CD8-positive, alpha-beta memory T cell (primary cell): ENCODE measurements at regions of chr14 and their contacts with region 1.

Region 1: GRCh38 chr14:105045710-105046326 is 19.4 kb downstream of the GPR132 start:
- DNase-seq: peak; percentile 85 to 94 (median 93)
- H3K4me3 ChIP-seq: no peak overlapping the region
- H3K4me3 Mint-ChIP-seq: peak overlapping the region in 3 of 7 donors; percentile 3 to 23 (median 23)
- H3K27ac ChIP-seq: no peak overlapping the region
- H3K27ac Mint-ChIP-seq: peak overlapping the region; percentile 19 to 87 (median 70)
- H3K4me1 ChIP-seq: peaks cover 6% of the 10 kb centered on the region
- H3K4me1 Mint-ChIP-seq: peaks cover 9 to 17% (median 14%) of the 10 kb centered on the region in 3 donors
- H3K27me3 ChIP-seq: peaks cover 4% of the 10 kb centered on the region
- H3K27me3 Mint-ChIP-seq: peaks cover 3 to 4% of the 10 kb centered on the region in 2 donors

Region 2: GRCh38 chr14:104970231-104971101 is 75.4 kb before region 1 on chr14:
- CTCF ChIA-PET with region 1: interaction called, 122 read pairs
- POLR2A ChIA-PET with region 1: interaction called, 7 read pairs
- DNase-seq: no peak
- H3K4me3 ChIP-seq: no peak overlapping the region
- H3K4me3 Mint-ChIP-seq: no peak overlapping the region
- H3K27ac ChIP-seq: no peak overlapping the region
- H3K27ac Mint-ChIP-seq: no peak overlapping the region
- H3K4me1 ChIP-seq: no peaks in the 10 kb centered on the region
- H3K4me1 Mint-ChIP-seq: no peaks in the 10 kb centered on the region
- H3K27me3 ChIP-seq: peaks cover 4% of the 10 kb centered on the region
- H3K27me3 Mint-ChIP-seq: peaks cover 5 to 20% of the 10 kb centered on the region in 2 donors

Region 3: DNA sequence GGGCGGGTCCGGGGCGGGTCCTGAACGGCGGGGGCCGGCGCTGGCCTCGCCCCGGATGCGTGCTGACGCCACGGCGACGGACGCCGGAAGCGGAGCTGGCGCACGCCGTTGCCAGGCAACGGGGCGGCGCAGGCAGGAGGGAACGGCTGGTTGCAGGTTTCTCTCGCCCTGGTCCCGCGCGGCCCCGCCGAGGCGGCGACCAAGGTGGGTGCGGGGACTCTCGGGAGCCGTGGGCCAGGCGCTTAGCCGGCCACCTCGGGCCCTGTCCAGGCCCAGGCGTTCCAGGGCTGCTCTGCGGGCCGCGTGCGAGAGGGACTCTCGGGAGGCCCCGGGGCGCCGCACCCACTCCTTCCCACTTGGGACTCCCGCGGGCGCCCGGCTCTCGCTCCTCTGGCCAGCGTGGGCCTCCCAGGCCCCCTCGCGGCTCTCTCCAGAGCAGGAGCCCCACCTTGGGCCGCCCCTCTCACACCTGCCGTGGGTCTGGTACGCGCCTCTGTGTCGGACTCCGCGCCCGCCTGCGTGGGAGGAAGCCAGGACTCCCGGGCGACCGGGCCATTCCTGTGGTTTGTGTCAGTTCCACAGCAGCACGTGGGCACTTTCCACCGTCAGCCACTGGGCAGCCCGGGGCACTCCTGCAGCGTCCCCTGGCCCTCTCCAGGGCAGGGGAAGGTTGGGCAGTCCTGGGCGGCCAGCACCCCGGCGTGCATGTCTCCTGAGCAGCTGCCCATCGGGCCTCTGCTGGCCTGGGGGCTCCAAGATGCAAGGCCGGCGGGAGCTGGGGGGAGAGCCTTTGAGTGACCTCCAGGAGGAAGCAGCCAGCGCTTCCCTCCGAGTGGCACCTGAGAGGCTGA is 59.9 kb before region 1 on chr14 and contains the start of gene CLBA1:
- CTCF ChIA-PET with region 1: interaction called, 37 read pairs
- POLR2A ChIA-PET with region 1: interaction called, 5 read pairs
- DNase-seq: peak; percentile 85 to 92 (median 89)
- H3K4me3 ChIP-seq: peak within 1 kb of the TSS; percentile 50
- H3K4me3 Mint-ChIP-seq: peak within 1 kb of the TSS; percentile 60 to 94 (median 76)
- H3K27ac ChIP-seq: peak within 1 kb of the TSS; percentile 78
- H3K27ac Mint-ChIP-seq: peak within 1 kb of the TSS; percentile 34 to 93 (median 80)
- H3K4me1 ChIP-seq: peaks cover 6% of the 10 kb centered on the region
- H3K4me1 Mint-ChIP-seq: peaks cover 0 to 7% (median 5%) of the 10 kb centered on the region in 3 donors
- H3K27me3 ChIP-seq: peaks cover 6% of the 10 kb centered on the region
- H3K27me3 Mint-ChIP-seq: peaks cover 1 to 3% of the 10 kb centered on the region in 2 donors
- total RNA-seq, gene CLBA1: 3.8 to 3.9 TPM

Region 4: DNA sequence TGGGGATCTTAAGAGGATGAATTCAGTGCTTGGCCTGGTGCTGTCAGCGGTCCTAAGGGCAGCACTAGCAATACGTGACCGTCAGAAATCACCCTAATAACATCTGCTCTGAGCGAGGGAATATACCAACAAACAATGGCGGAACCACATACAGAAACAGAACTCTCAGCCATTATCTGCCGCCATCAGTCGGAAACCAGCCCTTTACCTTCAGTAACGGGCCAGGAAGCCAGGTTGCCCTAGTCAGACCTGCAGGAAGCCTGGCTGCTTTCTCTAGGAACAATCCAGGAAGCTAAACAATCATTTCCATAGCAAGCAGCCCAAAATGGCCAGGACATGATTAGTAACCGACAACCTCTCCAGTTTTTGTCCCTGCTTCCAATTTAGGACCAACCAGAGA is 30.6 kb before region 1 on chr14:
- CTCF ChIA-PET with region 1: interaction called, 47 read pairs
- POLR2A ChIA-PET with region 1: no interaction called
- DNase-seq: peak in 3 of 5 donors; percentile 19 to 50 (median 24)
- H3K4me3 ChIP-seq: peak overlapping the region; percentile 18
- H3K4me3 Mint-ChIP-seq: peak overlapping the region; percentile 28 to 88 (median 73)
- H3K27ac ChIP-seq: peak overlapping the region; percentile 5
- H3K27ac Mint-ChIP-seq: peak overlapping the region; percentile 70 to 98 (median 88)
- H3K4me1 ChIP-seq: peaks cover 46% of the 10 kb centered on the region
- H3K4me1 Mint-ChIP-seq: peaks cover 73 to 84% (median 80%) of the 10 kb centered on the region in 3 donors
- H3K27me3 ChIP-seq: no peaks in the 10 kb centered on the region
- H3K27me3 Mint-ChIP-seq: peaks cover 0 to 3% of the 10 kb centered on the region in 2 donors

Region 5: DNA sequence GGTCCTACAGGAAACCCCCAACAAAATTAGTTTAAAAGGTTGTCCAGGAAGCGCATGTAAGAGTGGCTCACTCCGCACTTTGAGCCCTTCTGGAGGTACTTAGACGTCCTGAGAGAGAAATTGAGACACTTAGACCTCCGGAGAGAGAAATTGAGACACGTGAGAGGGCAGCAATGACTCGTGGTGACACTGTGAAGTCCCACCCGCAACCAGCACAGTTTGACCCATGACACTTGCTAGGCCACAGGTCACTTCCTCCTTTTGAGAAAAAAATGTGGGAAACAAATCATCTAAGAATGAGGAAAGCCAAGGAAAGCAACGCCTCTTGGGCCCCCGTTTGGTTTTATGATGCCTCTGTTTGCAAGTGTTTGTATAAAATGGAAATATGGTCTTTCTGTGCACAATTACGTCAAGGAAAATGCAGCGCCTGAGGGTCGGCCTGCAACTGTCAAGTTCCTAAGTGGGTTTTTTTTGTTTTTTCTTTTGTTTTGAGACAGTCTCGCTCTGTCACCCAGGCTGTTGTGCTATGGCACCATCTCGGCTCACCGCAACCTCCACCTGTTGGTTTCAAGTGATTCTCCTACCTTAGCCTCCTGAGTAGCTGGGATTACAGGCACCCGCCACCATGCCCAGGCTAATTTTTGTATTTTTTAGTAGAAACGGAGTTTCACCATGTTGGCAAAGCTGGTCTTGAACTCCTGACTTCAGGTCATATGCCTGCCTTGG is 11.3 kb before region 1 on chr14:
- CTCF ChIA-PET with region 1: interaction called, 30 read pairs
- POLR2A ChIA-PET with region 1: no interaction called
- DNase-seq: no peak
- H3K4me3 ChIP-seq: no peak overlapping the region
- H3K4me3 Mint-ChIP-seq: peak overlapping the region; percentile 43 to 96 (median 90)
- H3K27ac ChIP-seq: no peak overlapping the region
- H3K27ac Mint-ChIP-seq: peak overlapping the region in 7 of 8 donors; percentile 35 to 95 (median 90)
- H3K4me1 ChIP-seq: peaks cover 4% of the 10 kb centered on the region
- H3K4me1 Mint-ChIP-seq: peaks cover 17 to 22% (median 22%) of the 10 kb centered on the region in 3 donors
- H3K27me3 ChIP-seq: no peaks in the 10 kb centered on the region
- H3K27me3 Mint-ChIP-seq: no peaks in the 10 kb centered on the region

Region 6: GRCh38 chr14:105086833-105087307 is 41.1 kb after region 1 on chr14:
- CTCF ChIA-PET with region 1: interaction called, 27 read pairs
- POLR2A ChIA-PET with region 1: interaction called, 3 read pairs
- DNase-seq: peak; percentile 74 to 88 (median 85)
- H3K4me3 ChIP-seq: peak overlapping the region; percentile 67
- H3K4me3 Mint-ChIP-seq: peak overlapping the region; percentile 77 to 91 (median 80)
- H3K27ac ChIP-seq: peak overlapping the region; percentile 47
- H3K27ac Mint-ChIP-seq: peak overlapping the region in 7 of 8 donors; percentile 50 to 95 (median 83)
- H3K4me1 ChIP-seq: peaks cover 19% of the 10 kb centered on the region
- H3K4me1 Mint-ChIP-seq: peaks cover 5 to 26% (median 11%) of the 10 kb centered on the region in 3 donors
- H3K27me3 ChIP-seq: no peaks in the 10 kb centered on the region
- H3K27me3 Mint-ChIP-seq: no peaks in the 10 kb centered on the region